ENCODE measurements at regions of chr12 and their contacts with region 1.

Region 1: GRCh38 chr12:50520416-50521207 is 15.8 kb downstream of the DIP2B start:
- DNase-seq: no peak
- H3K4me3 ChIP-seq: peak overlapping the region; percentile 15
- H3K27ac ChIP-seq: peak overlapping the region; percentile 78
- H3K4me1 ChIP-seq: peaks cover 56% of the 10 kb centered on the region
- H3K27me3 ChIP-seq: no peaks in the 10 kb centered on the region
- CTCF ChIP-seq: peak; percentile 16

Region 2: DNA sequence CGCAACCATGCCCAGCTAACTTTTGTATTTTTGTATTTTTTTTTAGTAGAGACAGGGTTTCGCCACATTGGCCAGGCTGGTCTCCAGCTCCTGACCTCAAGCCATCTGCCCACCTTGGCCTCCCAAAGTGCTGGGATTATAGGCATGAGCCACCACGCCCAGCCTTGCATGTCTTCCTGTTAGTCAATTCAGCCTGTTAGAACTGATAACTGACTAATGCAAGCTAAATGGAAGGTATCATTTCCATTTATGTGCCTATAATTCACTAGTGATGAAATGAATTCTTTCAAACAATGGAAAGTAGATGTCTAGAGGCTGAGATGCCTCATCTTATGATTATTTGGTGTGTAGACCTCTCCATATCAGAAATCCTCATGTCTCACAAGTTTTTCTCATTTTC is 53.2 kb before region 1 on chr12:
- intact Hi-C with region 1: no loop called
- DNase-seq: no peak
- H3K4me3 ChIP-seq: no peak overlapping the region
- H3K27ac ChIP-seq: no peak overlapping the region
- H3K4me1 ChIP-seq: peaks cover 9% of the 10 kb centered on the region
- H3K27me3 ChIP-seq: no peaks in the 10 kb centered on the region
- CTCF ChIP-seq: no peak

Region 3: GRCh38 chr12:50572271-50572670 is 51.7 kb after region 1 on chr12:
- intact Hi-C with region 1: loop called (anchors 10 kb)
- DNase-seq: no peak
- H3K4me3 ChIP-seq: no peak overlapping the region
- H3K27ac ChIP-seq: peak overlapping the region; percentile 21
- H3K4me1 ChIP-seq: peaks cover 74% of the 10 kb centered on the region
- H3K27me3 ChIP-seq: no peaks in the 10 kb centered on the region
- CTCF ChIP-seq: no peak

Region 4: DNA sequence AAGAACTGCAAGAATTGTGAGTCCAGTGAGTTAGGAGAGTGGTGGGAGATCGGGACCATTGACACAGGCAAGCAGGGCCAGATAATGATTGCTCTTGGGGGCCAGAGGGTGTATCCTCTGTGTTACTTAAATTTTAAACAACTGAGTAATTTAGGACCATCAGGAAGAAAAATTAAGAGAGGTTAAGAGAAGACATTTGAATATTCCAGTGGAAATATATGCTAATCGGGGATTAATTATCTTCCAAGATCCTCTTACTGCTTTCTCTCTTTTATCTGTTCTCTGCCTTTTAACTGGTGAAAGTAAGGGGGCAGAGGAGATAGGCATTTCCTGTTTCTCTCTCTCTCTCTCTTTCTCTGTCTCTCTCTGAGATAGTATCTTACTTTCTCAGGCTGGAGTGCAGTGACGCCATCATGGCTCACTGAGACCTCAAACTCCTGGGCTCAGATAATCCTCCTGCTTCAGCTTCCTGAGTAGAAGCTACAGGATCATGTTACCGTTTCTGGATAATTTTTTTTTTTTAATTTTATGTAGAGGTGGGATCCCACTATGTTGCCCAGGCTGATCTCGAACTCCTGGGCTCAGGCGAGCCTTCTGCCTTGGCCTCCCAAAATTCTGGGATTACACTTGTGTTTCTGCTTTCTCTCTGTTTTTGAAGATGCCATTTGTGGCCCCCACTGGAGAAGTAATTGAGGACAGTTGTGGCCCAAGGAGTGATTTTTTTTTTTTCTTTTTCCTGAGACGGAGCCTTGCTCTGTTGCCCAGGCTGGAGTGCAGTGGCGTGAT is 69.2 kb after region 1 on chr12:
- intact Hi-C with region 1: no loop called
- DNase-seq: no peak
- H3K4me3 ChIP-seq: no peak overlapping the region
- H3K27ac ChIP-seq: no peak overlapping the region
- H3K4me1 ChIP-seq: no peaks in the 10 kb centered on the region
- H3K27me3 ChIP-seq: no peaks in the 10 kb centered on the region
- CTCF ChIP-seq: no peak